PC-3 (cell line): ENCODE measurements at regions of chr11 and their contacts with region 1.

Region 1: DNA sequence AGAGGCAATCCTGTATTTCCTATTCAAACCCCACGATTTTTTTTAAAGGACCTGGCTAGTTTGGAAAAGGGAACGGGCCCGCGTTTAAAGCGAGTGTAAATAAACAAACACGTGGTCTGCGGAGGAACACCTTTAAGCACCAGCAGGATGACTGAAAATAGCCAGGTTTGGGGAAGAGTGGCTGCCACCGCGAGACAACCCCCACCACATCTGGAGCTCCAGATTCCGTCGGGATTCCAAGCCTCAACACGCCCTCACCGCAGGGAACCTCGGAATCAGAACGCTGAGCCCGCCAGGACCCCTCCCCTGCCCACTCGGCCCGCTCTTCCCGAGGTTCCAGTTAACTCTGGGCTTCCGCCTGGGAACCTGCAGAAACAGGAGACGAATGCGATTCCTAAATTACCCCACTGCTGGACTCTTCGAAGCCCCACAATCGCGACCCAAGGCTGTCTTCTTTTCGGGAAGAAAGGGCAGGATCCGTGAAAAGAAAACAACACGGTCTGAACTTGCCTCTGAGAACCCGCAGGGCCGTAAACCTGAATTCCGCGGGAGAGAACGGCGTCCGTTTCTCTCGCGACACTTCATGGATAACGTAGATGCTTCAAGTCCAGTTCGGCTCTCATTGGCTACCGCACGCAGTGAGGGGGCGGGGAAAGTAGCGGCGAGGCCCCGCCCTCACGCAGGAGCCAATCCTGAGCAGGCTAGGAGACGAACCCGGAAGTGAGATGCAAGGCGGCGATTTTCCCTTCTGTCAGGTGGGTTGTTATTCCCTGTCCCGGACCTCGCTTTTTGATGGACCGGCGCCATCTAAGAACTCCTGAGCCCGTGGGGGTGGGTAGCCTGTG is at the starts of genes ANKRD49 and MRE11:
- DNase-seq: peak; percentile 100
- ATAC-seq: peak; percentile 99
- H3K4me3 ChIP-seq: peak within 1 kb of the TSS; percentile 79
- H3K27ac ChIP-seq: peak within 1 kb of the TSS; percentile 60
- H3K4me1 ChIP-seq: peaks cover 25% of the 10 kb centered on the region
- H3K27me3 ChIP-seq: no peaks in the 10 kb centered on the region
- CTCF ChIP-seq: no peak
- total RNA-seq, gene ANKRD49: 6.9 and 9.0 TPM in 2 replicates
- total RNA-seq, gene MRE11: 19.0 and 20.1 TPM in 2 replicates

Region 2: GRCh38 chr11:93908689-93909088 is 584.8 kb before region 1 on chr11:
- CTCF ChIA-PET with region 1: no interaction called
- POLR2A ChIA-PET with region 1: no interaction called
- intact Hi-C with region 1: loop called (anchors 5 kb)
- DNase-seq: peak; percentile 93
- ATAC-seq: peak; percentile 64
- H3K4me3 ChIP-seq: no peak overlapping the region
- H3K27ac ChIP-seq: peak overlapping the region; percentile 72
- H3K4me1 ChIP-seq: peaks cover 47% of the 10 kb centered on the region
- H3K27me3 ChIP-seq: no peaks in the 10 kb centered on the region
- CTCF ChIP-seq: no peak

Region 3: DNA sequence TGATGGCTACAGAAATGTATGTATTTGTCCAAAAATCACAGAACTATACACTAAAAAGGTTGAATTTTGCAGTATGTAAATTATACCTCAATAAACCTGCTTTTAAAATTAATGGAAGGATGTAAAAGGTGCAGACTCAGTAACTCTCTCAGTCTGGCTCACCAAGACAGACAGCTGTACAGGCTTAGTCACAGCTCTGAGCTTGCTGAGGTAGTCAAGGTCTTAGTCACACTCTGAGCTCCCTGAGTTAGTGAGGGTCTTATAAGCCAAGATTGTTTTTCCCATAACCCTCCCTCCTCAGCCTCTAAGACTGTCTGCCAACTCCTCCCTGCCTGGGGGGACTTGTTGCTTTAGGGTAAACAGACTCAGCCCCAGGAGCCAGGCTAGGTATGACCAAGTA is 248.4 kb before region 1 on chr11:
- CTCF ChIA-PET with region 1: no interaction called
- POLR2A ChIA-PET with region 1: no interaction called
- intact Hi-C with region 1: loop called (anchors 5 kb)
- DNase-seq: peak; percentile 36
- ATAC-seq: no peak
- H3K4me3 ChIP-seq: no peak overlapping the region
- H3K27ac ChIP-seq: no peak overlapping the region
- H3K4me1 ChIP-seq: no peaks in the 10 kb centered on the region
- H3K27me3 ChIP-seq: no peaks in the 10 kb centered on the region
- CTCF ChIP-seq: no peak

Region 4: DNA sequence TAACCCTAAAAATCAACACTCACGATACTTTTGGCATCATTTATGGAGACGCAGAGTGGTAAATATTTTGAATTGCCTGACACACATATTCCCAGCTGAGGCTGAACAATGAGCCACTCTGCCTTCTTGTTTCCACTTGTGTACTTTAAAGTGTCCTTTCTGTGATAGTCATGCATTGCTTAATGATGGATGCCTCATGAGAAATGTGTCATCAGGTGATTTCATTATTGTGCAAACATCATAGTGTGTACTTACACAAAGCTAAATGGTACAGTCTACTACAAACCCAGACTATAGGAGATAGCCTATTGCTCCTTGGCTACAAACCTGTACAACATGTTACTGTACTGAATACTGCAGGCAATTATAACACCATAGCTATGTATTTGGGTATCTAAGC is 44.1 kb before region 1 on chr11:
- CTCF ChIA-PET with region 1: no interaction called
- POLR2A ChIA-PET with region 1: no interaction called
- intact Hi-C with region 1: loop called (anchors 1 kb)
- DNase-seq: peak; percentile 99
- ATAC-seq: peak; percentile 99
- H3K4me3 ChIP-seq: peak overlapping the region; percentile 7; the same call in 1 of the 2 replicates
- H3K27ac ChIP-seq: peak overlapping the region; percentile 84
- H3K4me1 ChIP-seq: peaks cover 19% of the 10 kb centered on the region
- H3K27me3 ChIP-seq: no peaks in the 10 kb centered on the region
- CTCF ChIP-seq: no peak

Region 5: DNA sequence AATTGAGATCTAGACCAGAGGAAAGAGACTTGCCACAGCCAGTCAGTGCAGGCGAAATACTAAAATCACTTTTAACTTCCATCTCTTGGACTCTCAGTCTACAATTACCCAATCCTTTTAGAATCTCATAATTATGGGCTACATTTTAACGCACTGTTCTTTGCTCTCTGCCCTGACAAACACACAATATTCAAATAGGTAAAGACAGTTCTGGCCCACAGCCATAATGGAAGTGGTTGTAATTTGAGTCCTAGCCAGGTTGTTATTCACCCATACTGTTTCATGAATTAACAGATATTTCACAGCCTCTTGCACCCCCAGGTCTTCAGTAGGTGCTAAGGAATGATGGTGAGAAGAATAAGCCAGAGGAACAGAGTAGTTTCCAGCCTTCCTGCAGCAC is 19.6 kb after region 1 on chr11:
- CTCF ChIA-PET with region 1: no interaction called
- POLR2A ChIA-PET with region 1: no interaction called
- intact Hi-C with region 1: loop called (anchors 1 kb)
- DNase-seq: peak; percentile 75
- ATAC-seq: peak; percentile 37
- H3K4me3 ChIP-seq: peak overlapping the region; percentile 83
- H3K27ac ChIP-seq: no peak overlapping the region
- H3K4me1 ChIP-seq: peaks cover 16% of the 10 kb centered on the region
- H3K27me3 ChIP-seq: no peaks in the 10 kb centered on the region
- CTCF ChIP-seq: no peak

Region 6: DNA sequence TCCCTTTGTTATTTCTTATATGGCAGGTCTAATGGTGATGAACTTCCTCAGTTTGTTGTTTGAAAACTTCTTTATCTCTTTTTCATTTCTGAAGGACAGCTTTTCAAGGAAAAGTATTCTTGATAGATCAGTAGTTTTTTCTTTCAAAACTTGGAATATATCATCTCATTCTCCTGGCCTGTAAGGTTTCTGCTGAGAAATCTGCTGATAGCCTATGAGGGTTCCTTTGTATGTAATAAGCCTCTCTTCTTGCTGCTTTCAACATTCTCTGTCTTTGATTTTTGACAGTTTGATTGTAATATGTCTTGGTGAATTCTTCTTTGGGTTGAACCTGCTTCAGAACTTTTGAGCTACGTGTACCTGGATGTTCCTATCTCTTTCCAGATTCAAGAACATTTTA is 119.6 kb after region 1 on chr11:
- CTCF ChIA-PET with region 1: no interaction called
- POLR2A ChIA-PET with region 1: no interaction called
- intact Hi-C with region 1: no loop called
- DNase-seq: no peak
- ATAC-seq: no peak
- H3K4me3 ChIP-seq: no peak overlapping the region
- H3K27ac ChIP-seq: no peak overlapping the region
- H3K4me1 ChIP-seq: no peaks in the 10 kb centered on the region
- H3K27me3 ChIP-seq: no peaks in the 10 kb centered on the region
- CTCF ChIP-seq: no peak